ENCODE measurements at regions of chr4 and their contacts with region 1.

Region 1: GRCh38 chr4:139030614-139031235 is 15.1 kb downstream of the NOCT start:
- DNase-seq: peak; percentile 84
- H3K4me3 ChIP-seq: no peak overlapping the region
- H3K27ac ChIP-seq: no peak overlapping the region
- H3K4me1 ChIP-seq: no peaks in the 10 kb centered on the region
- H3K27me3 ChIP-seq: no peaks in the 10 kb centered on the region
- CTCF ChIP-seq: peak; percentile 74 to 76
- POLR2A ChIP-seq: no peak

Region 2: GRCh38 chr4:139015269-139015947 is 15.3 kb before region 1 on chr4 and contains the start of gene NOCT:
- CTCF ChIA-PET with region 1: interaction called, 124 read pairs
- POLR2A ChIA-PET with region 1: interaction called, 5 read pairs
- dilution Hi-C with region 1: no loop called
- intact Hi-C with region 1: no loop called
- DNase-seq: peak; percentile 88
- H3K4me3 ChIP-seq: peak within 1 kb of the TSS; percentile 90 to 100 (median 99)
- H3K27ac ChIP-seq: peak within 1 kb of the TSS; percentile 100
- H3K4me1 ChIP-seq: peaks cover 35% of the 10 kb centered on the region
- H3K27me3 ChIP-seq: no peaks in the 10 kb centered on the region
- CTCF ChIP-seq: peak in 1 of 2 donors; percentile 29
- POLR2A ChIP-seq: peak; percentile 90
- total RNA-seq, gene NOCT: 20.1 and 20.7 TPM in 2 replicates

Region 3: GRCh38 chr4:139083956-139084803 is 53.5 kb after region 1 on chr4:
- CTCF ChIA-PET with region 1: interaction called, 66 read pairs
- POLR2A ChIA-PET with region 1: no interaction called
- dilution Hi-C with region 1: no loop called
- intact Hi-C with region 1: loop called (anchors 1 kb)
- DNase-seq: peak; percentile 91
- H3K4me3 ChIP-seq: peak overlapping the region; percentile 65 to 100 (median 92)
- H3K27ac ChIP-seq: peak overlapping the region; percentile 85
- H3K4me1 ChIP-seq: peaks cover 19% of the 10 kb centered on the region
- H3K27me3 ChIP-seq: no peaks in the 10 kb centered on the region
- CTCF ChIP-seq: peak in 1 of 2 donors; percentile 32
- POLR2A ChIP-seq: peak; percentile 36

Region 4: DNA sequence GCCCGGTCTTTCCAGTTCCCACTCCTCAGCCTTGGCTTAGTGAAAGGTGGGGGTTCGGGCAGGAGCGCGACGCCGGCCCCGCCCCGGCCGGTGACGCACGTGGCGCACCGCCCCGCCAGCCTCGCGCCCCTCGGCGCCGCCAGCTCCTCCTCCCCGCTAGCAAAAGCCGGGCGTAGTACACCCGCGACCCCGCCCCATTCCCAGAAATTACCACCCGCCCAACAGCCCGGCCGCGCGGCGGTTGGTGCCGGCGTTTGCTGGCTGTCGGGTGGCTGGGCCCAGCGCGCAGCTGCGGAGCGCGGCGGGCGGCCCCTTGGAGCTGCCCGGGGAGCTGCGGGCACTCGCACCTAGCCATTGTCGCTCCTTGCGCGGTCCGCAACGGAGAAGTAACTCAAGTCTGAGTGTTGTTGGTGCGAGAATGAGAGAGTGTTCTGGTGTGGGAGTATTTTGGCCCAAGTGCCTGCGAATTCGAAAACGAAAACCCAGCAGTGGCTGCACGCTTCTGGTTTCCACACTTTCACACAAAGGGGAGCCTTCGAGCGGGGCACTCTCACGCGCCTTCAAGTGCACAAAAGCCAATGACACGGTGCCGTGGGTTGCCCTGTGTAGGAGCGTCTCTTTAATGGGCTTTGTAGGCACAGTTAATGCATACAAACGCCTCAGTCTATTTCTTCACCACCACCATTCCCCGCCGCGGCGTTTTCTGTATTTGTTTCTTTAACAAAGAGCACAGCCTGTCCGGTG is 147.3 kb after region 1 on chr4:
- CTCF ChIA-PET with region 1: interaction called, 37 read pairs
- POLR2A ChIA-PET with region 1: interaction called, 3 read pairs
- dilution Hi-C with region 1: no loop called
- intact Hi-C with region 1: loop called (anchors 1 kb)
- DNase-seq: peak; percentile 96
- H3K4me3 ChIP-seq: peak overlapping the region; percentile 83 to 93 (median 84)
- H3K27ac ChIP-seq: peak overlapping the region; percentile 75
- H3K4me1 ChIP-seq: peaks cover 7% of the 10 kb centered on the region
- H3K27me3 ChIP-seq: no peaks in the 10 kb centered on the region
- CTCF ChIP-seq: no peak
- POLR2A ChIP-seq: peak; percentile 75

Region 5: DNA sequence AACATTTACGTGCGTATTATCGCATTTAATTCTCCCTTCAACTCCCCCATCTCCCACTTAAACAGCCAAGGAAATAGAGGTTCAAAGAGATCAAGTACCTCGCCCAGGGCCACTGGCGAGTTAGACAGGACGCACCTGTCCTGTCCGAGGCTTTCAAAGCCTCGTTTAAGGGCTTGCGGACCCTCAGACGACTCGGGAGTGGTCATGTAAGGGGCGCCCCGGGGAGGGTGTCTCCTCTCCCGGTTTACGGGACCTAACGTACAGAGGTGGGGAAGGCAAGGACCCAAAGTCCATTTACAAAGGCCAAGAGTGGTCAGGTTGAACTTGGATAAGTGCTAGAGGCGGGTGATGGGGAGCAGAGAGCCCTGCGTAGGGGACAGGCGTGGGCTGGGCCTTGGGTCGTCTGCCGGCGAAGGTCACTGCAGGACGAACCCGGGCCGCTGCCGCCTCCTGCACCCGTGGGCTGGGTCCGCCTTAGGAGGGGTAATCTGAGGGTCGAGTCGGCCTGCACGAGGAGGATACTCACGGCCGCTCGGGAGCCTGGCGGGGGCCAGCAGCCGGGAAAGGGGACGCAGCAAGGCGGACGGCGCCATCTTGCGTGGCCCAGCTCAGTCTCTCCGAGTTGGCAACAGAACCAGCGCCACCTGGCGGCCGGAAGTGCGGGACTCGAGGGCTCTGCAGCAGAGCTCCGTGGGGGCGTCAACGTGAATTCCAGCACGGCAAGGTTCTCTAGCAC is 264.6 kb after region 1 on chr4:
- CTCF ChIA-PET with region 1: interaction called, 88 read pairs
- POLR2A ChIA-PET with region 1: no interaction called
- dilution Hi-C with region 1: no loop called
- intact Hi-C with region 1: loop called (anchors 1 kb)
- DNase-seq: peak; percentile 93
- H3K4me3 ChIP-seq: peak overlapping the region; percentile 63 to 87 (median 72)
- H3K27ac ChIP-seq: peak overlapping the region; percentile 65
- H3K4me1 ChIP-seq: peaks cover 20% of the 10 kb centered on the region
- H3K27me3 ChIP-seq: no peaks in the 10 kb centered on the region
- CTCF ChIP-seq: peak; percentile 96 to 97
- POLR2A ChIP-seq: peak; percentile 83

Region 6: GRCh38 chr4:139530833-139531427 is 500.2 kb after region 1 on chr4:
- CTCF ChIA-PET with region 1: interaction called, 10 read pairs
- POLR2A ChIA-PET with region 1: no interaction called
- dilution Hi-C with region 1: no loop called
- intact Hi-C with region 1: loop called (anchors 1 kb)
- DNase-seq: peak; percentile 50
- H3K4me3 ChIP-seq: no peak overlapping the region
- H3K27ac ChIP-seq: no peak overlapping the region
- H3K4me1 ChIP-seq: no peaks in the 10 kb centered on the region
- H3K27me3 ChIP-seq: no peaks in the 10 kb centered on the region
- CTCF ChIP-seq: peak; percentile 68
- POLR2A ChIP-seq: no peak